Dorsolateral prefrontal cortex (tissue), 120 donors: ENCODE measurements at regions of chr6 and their contacts with region 1.

Region 1: DNA sequence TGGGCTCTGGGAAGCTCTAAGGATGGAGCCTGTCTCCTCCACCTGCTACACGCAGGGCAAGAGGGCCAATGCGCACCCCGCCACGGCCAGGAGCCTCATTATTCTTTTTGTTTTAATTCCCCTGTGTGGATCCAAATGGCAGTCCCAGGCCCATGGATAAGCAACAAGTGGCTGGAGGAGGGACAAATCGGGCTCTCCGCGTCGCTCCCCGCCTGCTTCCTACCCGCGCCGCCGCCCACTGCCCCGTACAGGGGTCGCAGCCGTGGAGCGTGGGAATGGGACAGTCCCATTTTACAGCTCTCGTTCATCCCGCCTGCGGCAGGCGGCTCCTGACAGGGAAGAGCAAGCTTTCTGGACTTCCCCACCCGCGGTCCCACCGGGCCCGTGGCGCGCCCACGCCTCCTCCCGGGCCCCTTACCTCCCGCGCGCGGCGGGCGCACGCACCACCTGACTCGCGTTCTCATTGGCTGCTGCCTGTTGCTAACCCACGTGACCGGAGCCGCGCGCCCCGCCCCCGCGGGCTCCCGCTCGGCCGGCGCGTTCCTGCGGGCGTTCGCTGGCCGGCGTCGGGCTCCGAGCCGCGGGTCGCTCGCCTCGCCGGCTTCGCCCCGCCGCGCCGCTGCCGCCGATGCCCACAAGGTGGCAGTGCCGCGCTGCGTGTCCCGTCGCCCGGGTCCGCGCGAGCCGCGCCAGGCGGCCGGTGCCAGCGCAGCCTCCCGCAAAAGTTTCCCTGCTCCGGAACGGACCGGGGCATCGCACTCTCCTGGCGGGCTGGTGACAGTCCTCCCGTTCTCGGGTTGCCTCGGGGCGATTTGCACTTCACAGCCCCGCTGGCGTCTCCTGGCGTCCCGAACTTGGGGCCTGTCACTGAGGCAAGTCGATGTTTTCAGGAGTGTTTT is 93.3 kb downstream of the CD83 start:
- DNase-seq: peak; percentile 88 to 95 (median 91)
- H3K4me3 ChIP-seq: peak overlapping the region; percentile 59 to 96 (median 87)
- H3K27ac ChIP-seq: peak overlapping the region in 58 of 59 donors; percentile 43 to 96 (median 85)
- H3K27me3 ChIP-seq: no peaks in the 10 kb centered on the region
- CTCF ChIP-seq: peak in 54 of 56 donors; percentile 11 to 89 (median 66)

Region 2: GRCh38 chr6:14799928-14800327 is 589.0 kb after region 1 on chr6:
- intact Hi-C with region 1: loop called in 1 of 2 experiments (anchors 5 kb)
- DNase-seq: peak in 7 of 10 donors; percentile 10 to 67 (median 53)
- H3K4me3 ChIP-seq: no peak overlapping the region
- H3K27ac ChIP-seq: peak overlapping the region in 7 of 59 donors; percentile 5 to 62 (median 40)
- H3K27me3 ChIP-seq: no peaks in the 10 kb centered on the region
- CTCF ChIP-seq: peak in 2 of 56 donors; percentile 10

Region 3: DNA sequence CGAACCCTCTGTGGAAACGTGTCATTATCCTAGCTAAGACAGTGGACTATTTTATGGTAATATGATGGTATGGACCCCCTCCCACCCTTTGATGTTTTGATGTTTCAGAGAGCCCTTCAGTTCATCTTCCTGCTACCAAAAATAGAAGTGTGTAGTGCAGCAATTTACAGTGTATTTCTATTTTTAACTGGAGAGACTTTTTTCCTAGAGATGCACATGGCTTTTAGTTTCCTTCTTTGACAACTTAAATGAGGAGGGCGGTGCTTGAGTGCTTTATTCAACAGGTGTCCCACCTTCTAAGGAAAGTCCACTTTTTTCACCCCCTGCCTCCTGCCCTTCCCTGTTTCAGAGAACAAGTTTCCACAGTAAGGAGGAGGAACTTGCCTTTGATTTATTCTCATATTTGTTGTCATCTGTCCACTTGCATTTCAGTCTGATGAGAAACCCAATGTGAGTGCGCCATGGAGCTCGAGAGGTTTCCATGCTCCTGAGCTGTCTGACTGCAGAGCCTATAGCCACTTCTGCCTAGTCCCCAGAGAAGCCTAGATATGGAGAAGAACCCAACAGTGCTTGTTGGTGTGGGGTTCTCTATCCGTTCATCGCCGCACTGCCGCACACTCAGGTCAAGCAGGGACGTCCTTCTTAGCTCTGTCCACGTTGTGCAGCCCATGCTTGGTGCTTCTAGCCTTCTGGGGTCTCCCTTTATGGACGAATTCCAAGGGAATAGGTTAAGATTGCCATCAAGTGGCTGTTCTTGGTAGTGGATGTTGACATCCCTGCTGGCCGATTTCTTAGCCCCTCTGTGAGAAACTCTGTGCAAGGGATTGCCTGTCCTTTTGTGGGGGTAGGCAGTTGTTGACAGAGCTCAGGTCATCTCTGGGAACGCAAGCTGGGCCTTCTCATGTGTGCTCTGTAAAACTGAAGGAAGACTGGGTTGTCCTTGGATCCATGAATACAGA is 1179.1 kb after region 1 on chr6:
- intact Hi-C with region 1: loop called in 1 of 2 experiments (anchors 5 kb)
- DNase-seq: peak in 1 of 10 donors; percentile 30
- H3K4me3 ChIP-seq: peak overlapping the region in 2 of 59 donors; percentile 3 to 15
- H3K27ac ChIP-seq: peak overlapping the region in 20 of 59 donors; percentile 0 to 67 (median 20)
- H3K27me3 ChIP-seq: no peaks in the 10 kb centered on the region
- CTCF ChIP-seq: peak in 54 of 56 donors; percentile 47 to 80 (median 66)

Region 4: GRCh38 chr6:15491255-15491985 is 1280.5 kb after region 1 on chr6:
- intact Hi-C with region 1: loop called (anchors 1 to 5 kb)
- DNase-seq: peak; percentile 70 to 89 (median 83)
- H3K4me3 ChIP-seq: peak overlapping the region in 3 of 59 donors; percentile 0 to 6 (median 3)
- H3K27ac ChIP-seq: peak overlapping the region in 17 of 59 donors; percentile 1 to 67 (median 32)
- H3K27me3 ChIP-seq: no peaks in the 10 kb centered on the region
- CTCF ChIP-seq: peak; percentile 74 to 99 (median 96)

Region 5: GRCh38 chr6:15626878-15627674 is 1416.2 kb after region 1 on chr6:
- intact Hi-C with region 1: loop called (anchors 2 to 10 kb)
- DNase-seq: no peak
- H3K4me3 ChIP-seq: peak overlapping the region in 11 of 59 donors; percentile 3 to 24 (median 14)
- H3K27ac ChIP-seq: no peak overlapping the region
- H3K27me3 ChIP-seq: no peaks in the 10 kb centered on the region
- CTCF ChIP-seq: no peak